Dendritic cell treated with granulocyte-macrophage colony-stimulating factor and Interleukin-4, amounts not matched to agents 40 ng/mL and 50 ng/mL, for 4 days (primary cell): ENCODE measurements at regions of chr2 and their contacts with region 1.

Region 1: DNA sequence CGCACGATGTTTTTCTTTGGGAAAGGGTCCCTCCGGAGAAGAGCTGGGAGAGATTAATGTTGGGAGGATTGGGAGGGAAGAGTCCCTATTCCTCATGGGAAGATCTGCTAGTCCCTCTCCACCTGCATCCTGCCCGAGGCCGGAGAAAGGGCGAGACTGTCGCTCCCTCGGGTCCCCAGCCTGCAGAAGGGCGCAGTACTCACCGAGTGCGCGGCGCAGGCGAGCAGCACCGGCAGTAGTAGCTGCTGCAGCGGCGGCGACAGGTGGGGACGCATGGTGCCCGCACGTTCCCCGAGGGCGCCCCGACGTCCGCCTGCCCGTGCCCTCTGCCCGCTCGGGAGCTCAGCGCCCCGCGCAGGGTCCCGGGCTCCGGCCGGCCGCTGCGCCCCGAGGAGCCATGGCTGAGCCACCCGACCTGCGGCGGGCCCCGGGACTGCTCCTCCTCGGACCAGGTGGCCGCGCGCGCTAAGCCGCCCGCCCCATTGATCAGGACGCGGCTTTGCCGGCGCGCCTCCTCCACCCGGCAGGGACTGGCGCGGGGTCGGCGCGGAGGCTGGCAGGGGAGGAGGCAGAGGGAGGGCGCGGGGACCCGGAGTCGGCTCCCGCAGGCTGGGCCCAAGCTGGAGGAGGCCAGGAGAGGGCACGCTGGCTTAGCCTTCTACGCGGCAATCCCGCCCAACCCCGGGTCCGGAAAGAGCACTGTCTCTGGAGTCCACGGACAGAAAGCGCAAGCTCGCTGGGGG is at the start of gene SCTR:
- H3K4me3 Mint-ChIP-seq: no peak within 1 kb of the TSS
- H3K27ac Mint-ChIP-seq: no peak within 1 kb of the TSS
- H3K4me1 Mint-ChIP-seq: no peaks in the 10 kb centered on the region
- H3K27me3 Mint-ChIP-seq: peaks cover 54% of the 10 kb centered on the region

Region 2: DNA sequence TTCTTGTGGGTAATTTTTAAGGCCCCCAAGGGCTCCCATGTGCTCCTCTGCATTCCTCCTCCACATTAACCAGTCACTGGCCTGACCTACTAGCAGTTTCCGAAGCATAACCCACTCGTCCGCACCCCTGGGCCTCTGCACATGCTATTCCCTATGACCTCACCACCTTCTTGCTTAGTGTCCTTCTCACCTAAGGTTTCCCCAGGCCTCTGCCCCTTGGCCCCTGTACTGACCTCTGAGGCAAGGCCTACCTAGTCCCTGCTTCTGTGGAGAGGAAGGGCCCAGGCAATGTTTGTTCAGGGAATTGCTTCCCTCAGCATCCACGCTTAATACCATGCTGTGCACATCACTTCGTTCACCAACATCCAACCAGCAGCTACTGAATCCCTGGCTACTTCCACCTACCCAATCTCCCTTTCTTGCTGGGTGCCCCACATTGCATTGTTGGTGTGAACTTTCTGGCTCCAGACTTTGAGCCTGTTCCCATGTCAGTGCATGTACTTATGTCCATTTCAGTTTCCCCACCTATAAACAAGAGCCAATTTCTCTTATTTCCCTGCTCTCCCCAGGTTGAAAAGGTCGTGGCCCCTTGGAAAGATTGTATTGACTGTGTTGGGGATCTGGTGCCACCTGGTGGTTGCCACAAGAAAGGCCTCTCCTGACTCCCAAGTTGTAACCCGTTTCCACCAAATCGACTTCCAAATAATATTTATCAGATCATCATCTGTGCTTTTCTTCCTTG is 135.6 kb after region 1 on chr2:
- intact Hi-C with region 1: loop called (anchors 10 kb)
- H3K4me3 Mint-ChIP-seq: no peak overlapping the region
- H3K27ac Mint-ChIP-seq: no peak overlapping the region
- H3K4me1 Mint-ChIP-seq: peaks cover 28% of the 10 kb centered on the region
- H3K27me3 Mint-ChIP-seq: peaks cover 4% of the 10 kb centered on the region